GM12878 (cell line): ENCODE measurements at regions of chr2 and their contacts with region 1.

Region 1: DNA sequence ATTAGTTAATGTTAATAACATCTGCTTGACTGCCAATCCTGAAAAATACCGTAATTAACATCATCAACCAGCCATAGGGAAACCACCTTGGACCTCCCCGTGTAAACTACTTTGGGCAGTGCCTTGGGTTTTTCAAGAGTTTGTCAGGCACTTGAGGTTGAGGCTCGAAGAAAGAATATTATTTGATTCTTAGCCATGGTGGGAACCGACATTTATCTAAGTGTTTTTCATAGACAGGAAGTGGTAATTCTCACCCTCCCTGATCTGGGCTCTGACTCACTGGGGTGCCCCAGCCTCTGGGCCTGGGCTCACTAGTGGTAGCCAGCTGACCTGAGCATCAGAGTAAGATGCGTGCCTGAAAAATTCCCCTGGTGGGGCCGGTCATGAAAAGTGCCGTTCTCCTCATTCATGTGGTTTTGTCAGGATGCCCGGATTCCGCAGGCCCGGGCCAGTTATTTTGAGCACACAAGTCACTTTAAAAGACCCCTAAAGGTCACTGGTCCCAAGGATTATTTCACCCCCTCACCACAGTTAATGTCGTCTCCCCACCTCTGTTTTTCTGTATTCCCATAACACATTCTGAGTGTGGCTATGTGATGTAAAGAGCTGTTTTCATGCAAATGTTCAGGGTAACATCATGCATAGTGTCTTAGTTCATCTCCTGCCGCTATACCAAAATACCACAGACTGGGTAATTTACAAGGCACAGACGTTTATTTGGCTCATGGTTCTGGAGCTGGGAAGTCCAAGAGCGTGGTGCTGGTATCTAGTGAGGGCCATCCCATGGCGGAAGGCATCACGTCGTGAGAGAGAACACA is 21.6 kb upstream of the SPATA3 start:
- DNase-seq: peak; percentile 94
- ATAC-seq: peak; percentile 86
- H3K4me3 ChIP-seq: no peak overlapping the region; the same call in 1 of the 2 replicates
- H3K27ac ChIP-seq: peak overlapping the region; percentile 97
- H3K4me1 ChIP-seq: peaks cover 67% of the 10 kb centered on the region
- H3K27me3 ChIP-seq: no peaks in the 10 kb centered on the region
- CTCF ChIP-seq: no peak
- EP300 ChIP-seq: peak; percentile 79 to 94
- POLR2A ChIP-seq: 0 out of 2 replicates have a peak, but pooled peaks have one; percentile 44
- RAD21 ChIP-seq: peak; percentile 35

Region 2: DNA sequence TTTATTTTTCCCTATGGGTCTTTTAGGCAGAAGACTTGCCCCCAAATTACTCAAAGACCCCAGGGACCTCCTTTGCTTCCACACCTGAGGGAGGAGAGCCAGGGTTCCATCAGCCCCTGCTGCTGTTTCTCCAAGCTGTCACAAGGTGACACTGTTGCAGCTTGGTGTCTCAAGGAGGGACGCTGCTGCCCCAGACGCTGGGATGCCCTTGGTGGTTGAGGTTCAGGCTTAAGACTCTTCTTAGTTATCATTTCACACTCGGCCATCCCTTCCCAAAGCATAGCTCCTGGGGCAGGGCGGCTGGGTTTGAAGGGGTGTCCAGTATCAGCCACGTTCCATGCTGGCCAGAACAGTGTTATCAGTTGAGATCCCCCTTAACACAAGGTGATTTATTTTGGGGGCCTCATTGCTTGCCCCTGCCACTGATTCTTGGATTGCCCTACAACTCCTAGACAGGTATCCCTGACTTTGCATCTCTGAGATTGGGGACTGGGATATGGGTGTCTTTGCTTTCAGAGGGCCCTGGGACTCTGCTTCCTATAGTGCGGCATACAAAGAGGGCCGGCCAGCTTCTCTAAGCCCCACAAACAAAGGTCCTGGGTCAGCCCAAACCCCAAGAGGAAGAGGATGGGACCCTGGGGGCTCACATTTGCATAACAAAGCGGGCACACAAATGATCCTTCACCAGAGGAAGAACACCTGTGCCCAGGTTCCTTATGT is 72.0 kb before region 1 on chr2:
- CTCF ChIA-PET with region 1: interaction called, 6 read pairs
- POLR2A ChIA-PET with region 1: no interaction called
- RAD21 ChIA-PET with region 1: no interaction called
- SMC1A ChIA-PET with region 1: interaction called, 5 read pairs
- in situ Hi-C with region 1: no loop called
- intact Hi-C with region 1: loop called (anchors 1 kb)
- DNase-seq: no peak
- ATAC-seq: peak; percentile 94
- H3K4me3 ChIP-seq: no peak overlapping the region
- H3K27ac ChIP-seq: no peak overlapping the region
- H3K4me1 ChIP-seq: peaks cover 14% of the 10 kb centered on the region
- H3K27me3 ChIP-seq: no peaks in the 10 kb centered on the region
- CTCF ChIP-seq: peak; percentile 98 to 99 (median 98); a peak in 5 of 6 replicates
- EP300 ChIP-seq: no peak
- POLR2A ChIP-seq: no peak
- RAD21 ChIP-seq: peak; percentile 99

Region 3: GRCh38 chr2:230942920-230943896 is 31.1 kb before region 1 on chr2:
- CTCF ChIA-PET with region 1: interaction called, 14 read pairs
- POLR2A ChIA-PET with region 1: interaction called, 192 read pairs
- RAD21 ChIA-PET with region 1: interaction called, 76 read pairs
- SMC1A ChIA-PET with region 1: interaction called, 266 read pairs
- in situ Hi-C with region 1: no loop called
- intact Hi-C with region 1: loop called (anchors 1 kb)
- DNase-seq: peak; percentile 82
- ATAC-seq: peak; percentile 79
- H3K4me3 ChIP-seq: peak overlapping the region; percentile 85
- H3K27ac ChIP-seq: peak overlapping the region; percentile 99
- H3K4me1 ChIP-seq: peaks cover 27% of the 10 kb centered on the region
- H3K27me3 ChIP-seq: no peaks in the 10 kb centered on the region
- CTCF ChIP-seq: no peak
- EP300 ChIP-seq: no peak
- POLR2A ChIP-seq: peak; percentile 78
- RAD21 ChIP-seq: no peak

Region 4: GRCh38 chr2:230949966-230950873 is 24.1 kb before region 1 on chr2:
- CTCF ChIA-PET with region 1: interaction called, 14 read pairs
- POLR2A ChIA-PET with region 1: interaction called, 192 read pairs
- RAD21 ChIA-PET with region 1: interaction called, 76 read pairs
- SMC1A ChIA-PET with region 1: interaction called, 266 read pairs
- in situ Hi-C with region 1: no loop called
- intact Hi-C with region 1: loop called (anchors 1 kb)
- DNase-seq: peak; percentile 93
- ATAC-seq: peak; percentile 54
- H3K4me3 ChIP-seq: peak overlapping the region; percentile 23; the same call in 1 of the 2 replicates
- H3K27ac ChIP-seq: peak overlapping the region; percentile 99
- H3K4me1 ChIP-seq: peaks cover 83% of the 10 kb centered on the region
- H3K27me3 ChIP-seq: no peaks in the 10 kb centered on the region
- CTCF ChIP-seq: no peak
- EP300 ChIP-seq: peak; percentile 71 to 81
- POLR2A ChIP-seq: no peak; the same call in 1 of the 2 replicates
- RAD21 ChIP-seq: no peak; the same call in 1 of the 2 replicates

Region 5: GRCh38 chr2:230956827-230957755 is 17.2 kb before region 1 on chr2:
- CTCF ChIA-PET with region 1: interaction called, 8 read pairs
- POLR2A ChIA-PET with region 1: interaction called, 192 read pairs
- RAD21 ChIA-PET with region 1: interaction called, 76 read pairs
- SMC1A ChIA-PET with region 1: interaction called, 266 read pairs
- in situ Hi-C with region 1: no loop called
- intact Hi-C with region 1: loop called (anchors 1 kb)
- DNase-seq: peak; percentile 91
- ATAC-seq: peak; percentile 79
- H3K4me3 ChIP-seq: peak overlapping the region; percentile 72
- H3K27ac ChIP-seq: peak overlapping the region; percentile 99
- H3K4me1 ChIP-seq: peaks cover 54% of the 10 kb centered on the region
- H3K27me3 ChIP-seq: no peaks in the 10 kb centered on the region
- CTCF ChIP-seq: no peak
- EP300 ChIP-seq: peak; percentile 84 to 92; a peak in 2 of 4 replicates
- POLR2A ChIP-seq: peak; percentile 87
- RAD21 ChIP-seq: peak; percentile 37; the same call in 1 of the 2 replicates

Region 6: DNA sequence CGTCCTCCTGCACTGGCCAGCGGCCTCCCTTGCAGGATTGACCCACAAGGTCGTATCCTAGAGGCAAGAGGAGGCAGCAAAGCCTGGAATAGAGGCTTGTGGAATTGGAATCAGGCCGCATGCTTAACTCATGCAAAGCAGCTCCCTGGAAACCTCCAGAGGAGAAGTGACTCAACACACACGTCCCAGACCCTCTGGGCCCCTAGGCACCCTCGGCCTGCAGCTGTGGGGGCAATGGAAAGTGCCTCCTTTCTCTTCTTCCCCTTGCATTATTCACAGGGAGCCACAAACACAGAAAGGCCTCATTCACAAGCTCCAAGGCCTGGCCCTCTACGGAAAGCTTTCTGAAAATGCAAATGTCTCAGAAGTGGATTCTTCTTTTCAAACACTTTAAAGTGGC is 41.2 kb after region 1 on chr2:
- CTCF ChIA-PET with region 1: no interaction called
- POLR2A ChIA-PET with region 1: no interaction called
- RAD21 ChIA-PET with region 1: no interaction called
- SMC1A ChIA-PET with region 1: no interaction called
- in situ Hi-C with region 1: no loop called
- intact Hi-C with region 1: no loop called
- DNase-seq: no peak
- ATAC-seq: no peak
- H3K4me3 ChIP-seq: no peak overlapping the region
- H3K27ac ChIP-seq: no peak overlapping the region
- H3K4me1 ChIP-seq: no peaks in the 10 kb centered on the region
- H3K27me3 ChIP-seq: peaks cover 0 to 2% of the 10 kb centered on the region in 2 experiments; a peak in 2 of 4 replicates
- CTCF ChIP-seq: no peak
- EP300 ChIP-seq: no peak
- POLR2A ChIP-seq: no peak
- RAD21 ChIP-seq: no peak